IMR-90 (cell line): ENCODE measurements at regions of chr2 and their contacts with region 1.

Region 1: DNA sequence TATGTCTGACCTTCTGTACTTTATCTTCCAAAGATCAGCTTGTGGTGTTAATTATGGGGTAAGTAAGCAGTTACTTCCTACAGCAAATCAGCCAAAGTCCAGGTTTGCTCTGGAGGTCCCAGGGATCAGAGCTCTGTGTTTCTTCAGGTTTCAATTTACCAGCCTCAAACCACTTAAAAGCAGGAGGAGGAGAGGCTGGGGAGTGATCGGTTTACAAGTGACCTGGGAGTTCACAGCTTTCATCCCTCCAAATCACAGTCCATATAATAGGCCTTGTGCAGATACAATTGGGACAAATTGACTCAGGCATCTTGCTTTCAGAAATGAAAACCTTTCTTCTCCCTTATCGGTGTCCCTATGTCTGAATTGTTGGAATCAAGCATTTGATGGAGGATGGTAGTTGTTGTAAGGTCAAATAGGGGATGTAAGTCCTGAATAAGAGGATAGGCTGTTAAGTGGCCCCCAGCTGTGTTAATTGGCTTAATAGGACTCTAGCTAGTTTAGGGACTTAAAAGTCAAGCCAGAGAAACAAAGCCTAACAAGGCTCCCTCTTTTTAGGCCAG is 188.0 kb upstream of the NT5C1B start:
- DNase-seq: no peak
- ATAC-seq: no peak
- H3K4me3 ChIP-seq: no peak overlapping the region
- H3K27ac ChIP-seq: no peak overlapping the region
- H3K4me1 ChIP-seq: peaks cover 6% of the 10 kb centered on the region; the same call in 1 of the 2 replicates
- H3K27me3 ChIP-seq: no peaks in the 10 kb centered on the region
- CTCF ChIP-seq: no peak
- POLR2A ChIP-seq: no peak
- RAD21 ChIP-seq: no peak

Region 2: DNA sequence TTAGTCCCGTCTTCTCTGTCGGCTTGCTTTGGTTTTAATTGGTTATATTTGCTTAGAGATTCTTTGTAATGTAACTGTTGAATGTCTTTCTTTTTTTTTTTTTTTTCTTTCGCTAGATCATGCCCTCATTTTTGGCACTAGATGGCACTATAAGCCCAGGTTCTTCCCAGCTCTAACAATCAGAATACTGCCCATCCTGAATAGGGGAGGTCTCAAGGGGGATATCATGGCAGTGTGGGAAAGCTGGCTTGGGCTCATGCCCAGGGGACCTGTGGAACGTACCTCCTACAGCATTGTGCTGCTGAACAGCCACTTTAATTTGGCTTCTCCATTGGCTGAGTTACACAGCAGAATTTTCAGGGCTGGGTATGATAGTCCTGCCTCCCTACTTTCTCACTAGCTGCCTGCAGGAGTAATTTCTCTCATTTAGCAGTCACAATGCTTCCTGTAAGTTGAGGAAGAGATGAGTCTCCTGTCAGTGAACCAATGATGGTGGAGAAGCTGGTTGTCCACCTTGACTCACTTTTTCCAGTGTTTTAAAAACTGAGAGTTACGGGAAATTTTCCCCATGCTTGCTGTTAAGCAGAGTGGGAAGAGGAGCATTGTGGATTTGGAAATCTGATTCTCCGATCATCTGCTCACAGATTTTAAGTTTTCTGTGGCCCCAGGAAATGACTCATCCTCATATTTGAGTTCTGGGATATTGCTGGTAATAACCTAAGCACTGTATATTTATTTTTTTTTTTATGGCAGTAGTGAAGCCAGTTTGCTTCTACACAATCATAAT is 1306.3 kb before region 1 on chr2:
- CTCF ChIA-PET with region 1: no interaction called
- POLR2A ChIA-PET with region 1: no interaction called
- dilution Hi-C with region 1: no loop called
- in situ Hi-C with region 1: no loop called
- intact Hi-C with region 1: no loop called
- DNase-seq: peak; percentile 40
- ATAC-seq: peak; percentile 48
- H3K4me3 ChIP-seq: no peak overlapping the region
- H3K27ac ChIP-seq: no peak overlapping the region
- H3K4me1 ChIP-seq: no peaks in the 10 kb centered on the region
- H3K27me3 ChIP-seq: no peaks in the 10 kb centered on the region
- CTCF ChIP-seq: peak; percentile 45
- POLR2A ChIP-seq: no peak
- RAD21 ChIP-seq: peak; percentile 60

Region 3: GRCh38 chr2:19949071-19949470 is 1171.7 kb after region 1 on chr2:
- CTCF ChIA-PET with region 1: no interaction called
- POLR2A ChIA-PET with region 1: no interaction called
- dilution Hi-C with region 1: no loop called
- in situ Hi-C with region 1: no loop called
- intact Hi-C with region 1: loop called (anchors 5 kb)
- DNase-seq: peak; percentile 76
- ATAC-seq: peak; percentile 52; the same call in 1 of the 2 replicates
- H3K4me3 ChIP-seq: no peak overlapping the region
- H3K27ac ChIP-seq: no peak overlapping the region
- H3K4me1 ChIP-seq: peaks cover 5% of the 10 kb centered on the region
- H3K27me3 ChIP-seq: no peaks in the 10 kb centered on the region
- CTCF ChIP-seq: no peak
- POLR2A ChIP-seq: no peak
- RAD21 ChIP-seq: no peak